A673 (cell line): ENCODE measurements at regions of chr1 and their contacts with region 1.

Region 1: GRCh38 chr1:156941655-156942054 is 21.2 kb downstream of the LRRC71 start:
- DNase-seq: no peak
- H3K4me3 ChIP-seq: no peak overlapping the region
- H3K27ac ChIP-seq: no peak overlapping the region
- H3K4me1 ChIP-seq: no peaks in the 10 kb centered on the region
- H3K27me3 ChIP-seq: no peaks in the 10 kb centered on the region
- CTCF ChIP-seq: no peak

Region 2: DNA sequence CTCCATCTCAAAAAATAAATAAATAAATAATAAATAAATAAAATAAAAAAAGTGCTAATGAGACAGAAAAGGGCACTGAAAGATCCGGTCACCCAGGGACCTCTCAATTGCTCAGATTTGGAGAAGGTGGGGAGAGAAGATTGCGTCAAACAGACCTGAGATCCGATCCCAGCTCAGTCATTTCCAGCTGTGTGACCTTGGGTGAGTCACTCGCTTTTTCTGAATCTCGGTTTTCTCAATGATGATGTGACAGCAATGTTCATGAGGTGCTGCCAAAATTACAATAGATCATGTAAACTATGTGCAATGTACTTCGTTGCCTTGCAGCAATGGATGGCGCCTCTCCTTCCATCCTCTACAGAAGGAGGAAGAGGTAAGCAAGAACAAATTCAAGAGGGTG is 430.0 kb before region 1 on chr1:
- CTCF ChIA-PET with region 1: no interaction called
- POLR2A ChIA-PET with region 1: no interaction called
- intact Hi-C with region 1: no loop called
- DNase-seq: no peak
- H3K4me3 ChIP-seq: no peak overlapping the region
- H3K27ac ChIP-seq: no peak overlapping the region
- H3K4me1 ChIP-seq: no peaks in the 10 kb centered on the region
- H3K27me3 ChIP-seq: no peaks in the 10 kb centered on the region
- CTCF ChIP-seq: no peak

Region 3: GRCh38 chr1:156899956-156900718 is 41.5 kb before region 1 on chr1:
- CTCF ChIA-PET with region 1: no interaction called
- POLR2A ChIA-PET with region 1: no interaction called
- intact Hi-C with region 1: no loop called
- DNase-seq: no peak
- H3K4me3 ChIP-seq: no peak overlapping the region
- H3K27ac ChIP-seq: no peak overlapping the region
- H3K4me1 ChIP-seq: no peaks in the 10 kb centered on the region
- H3K27me3 ChIP-seq: no peaks in the 10 kb centered on the region
- CTCF ChIP-seq: no peak

Region 4: DNA sequence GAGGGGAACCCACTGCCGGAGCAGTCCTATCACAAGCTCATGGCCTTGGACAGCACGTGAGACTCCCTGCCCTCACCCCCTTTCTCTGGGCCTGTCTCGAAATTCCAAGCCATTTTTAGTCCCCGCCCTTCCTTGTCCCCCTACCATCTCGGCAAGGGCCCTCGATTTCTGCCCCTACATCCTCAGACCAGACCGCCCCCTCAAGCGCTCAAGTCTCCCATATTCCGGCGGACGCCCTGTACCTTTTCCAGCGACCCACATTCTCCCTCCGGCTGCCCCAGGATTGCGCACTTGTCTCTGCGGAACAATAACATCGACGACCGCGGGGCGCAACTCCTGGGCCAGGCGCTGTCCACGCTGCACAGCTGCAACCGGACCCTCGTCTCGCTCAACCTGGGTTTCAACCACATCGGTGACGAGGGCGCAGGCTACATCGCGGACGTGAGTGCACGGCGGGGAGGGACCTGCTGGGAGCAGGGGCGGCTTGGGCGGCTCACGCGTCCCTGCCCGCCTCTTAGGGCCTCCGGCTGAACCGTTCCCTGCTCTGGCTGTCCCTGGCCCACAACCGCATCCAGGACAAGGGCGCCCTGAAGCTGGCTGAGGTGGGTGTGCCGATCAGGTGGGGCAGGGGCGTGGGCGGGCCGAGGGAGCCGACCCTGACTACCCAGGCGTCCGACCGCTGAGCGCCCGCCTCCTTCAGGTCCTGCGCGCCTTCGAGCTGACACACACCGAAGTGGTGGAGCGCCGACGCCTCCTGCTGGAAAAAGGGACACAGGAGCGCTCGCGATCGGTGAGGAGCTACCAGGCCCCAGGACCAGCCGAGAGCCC is 14.2 kb before region 1 on chr1:
- CTCF ChIA-PET with region 1: no interaction called
- POLR2A ChIA-PET with region 1: interaction called, 17 read pairs
- intact Hi-C with region 1: no loop called
- DNase-seq: peak; percentile 85
- H3K4me3 ChIP-seq: peak overlapping the region; percentile 31
- H3K27ac ChIP-seq: no peak overlapping the region
- H3K4me1 ChIP-seq: no peaks in the 10 kb centered on the region
- H3K27me3 ChIP-seq: peaks cover 35% of the 10 kb centered on the region
- CTCF ChIP-seq: peak; percentile 81

Region 5: DNA sequence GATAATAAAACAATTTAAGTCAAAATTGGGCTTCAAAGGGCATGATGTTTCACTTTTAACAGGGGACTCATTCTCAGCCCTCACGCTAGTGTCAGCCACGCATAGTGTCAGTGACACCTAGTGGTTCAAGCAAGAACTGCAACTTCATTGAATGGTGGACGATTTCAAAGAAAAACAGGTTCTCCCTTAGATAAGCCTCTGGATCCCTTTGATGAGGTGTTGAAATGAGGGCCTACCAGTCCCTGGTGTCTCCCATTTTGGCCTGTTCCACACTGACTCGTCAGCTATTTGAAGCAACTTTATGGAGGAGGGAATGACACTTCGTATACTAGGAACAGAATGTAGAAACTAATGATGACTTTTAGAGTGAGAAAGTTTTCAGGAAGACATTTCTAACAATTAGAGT is 554.5 kb after region 1 on chr1:
- CTCF ChIA-PET with region 1: no interaction called
- POLR2A ChIA-PET with region 1: no interaction called
- intact Hi-C with region 1: no loop called
- DNase-seq: peak; percentile 57
- H3K4me3 ChIP-seq: no peak overlapping the region
- H3K27ac ChIP-seq: no peak overlapping the region
- H3K4me1 ChIP-seq: no peaks in the 10 kb centered on the region
- H3K27me3 ChIP-seq: peaks cover 19% of the 10 kb centered on the region
- CTCF ChIP-seq: peak; percentile 88